ENCODE measurements at regions of chr16 and their contacts with region 1.

Region 1: DNA sequence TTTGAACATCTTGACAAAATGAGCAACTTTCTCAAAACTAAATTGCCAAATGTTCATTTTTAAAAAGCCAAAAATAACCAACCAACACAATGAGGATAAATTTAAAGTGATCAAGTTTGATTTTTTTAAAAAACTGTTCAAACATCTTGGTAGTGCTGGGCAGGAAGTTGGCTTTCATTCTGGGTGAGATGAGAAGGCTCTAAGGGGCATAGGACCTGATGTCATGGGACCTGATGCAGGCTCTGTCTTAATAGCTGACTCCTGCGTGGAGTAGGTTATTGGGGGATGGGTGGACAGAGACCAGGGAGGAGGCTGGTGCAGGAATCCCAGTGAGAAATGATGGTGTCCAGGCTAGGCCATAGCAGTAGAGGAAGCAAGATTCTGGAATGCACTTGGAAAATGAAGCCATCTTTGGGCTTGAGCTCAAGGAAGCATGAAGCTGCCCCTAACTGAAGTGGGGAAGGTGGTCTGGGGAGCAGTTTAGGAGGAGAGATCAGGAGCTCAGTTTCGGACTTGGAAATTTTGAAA is 20.4 kb downstream of the NLRC5 start:
- DNase-seq: peak; percentile 31
- ATAC-seq: peak; percentile 38
- H3K4me3 Mint-ChIP-seq: peak overlapping the region; percentile 43
- H3K27ac Mint-ChIP-seq: peak overlapping the region; percentile 80
- H3K4me1 Mint-ChIP-seq: peaks cover 61% of the 10 kb centered on the region
- H3K27me3 Mint-ChIP-seq: no peaks in the 10 kb centered on the region

Region 2: DNA sequence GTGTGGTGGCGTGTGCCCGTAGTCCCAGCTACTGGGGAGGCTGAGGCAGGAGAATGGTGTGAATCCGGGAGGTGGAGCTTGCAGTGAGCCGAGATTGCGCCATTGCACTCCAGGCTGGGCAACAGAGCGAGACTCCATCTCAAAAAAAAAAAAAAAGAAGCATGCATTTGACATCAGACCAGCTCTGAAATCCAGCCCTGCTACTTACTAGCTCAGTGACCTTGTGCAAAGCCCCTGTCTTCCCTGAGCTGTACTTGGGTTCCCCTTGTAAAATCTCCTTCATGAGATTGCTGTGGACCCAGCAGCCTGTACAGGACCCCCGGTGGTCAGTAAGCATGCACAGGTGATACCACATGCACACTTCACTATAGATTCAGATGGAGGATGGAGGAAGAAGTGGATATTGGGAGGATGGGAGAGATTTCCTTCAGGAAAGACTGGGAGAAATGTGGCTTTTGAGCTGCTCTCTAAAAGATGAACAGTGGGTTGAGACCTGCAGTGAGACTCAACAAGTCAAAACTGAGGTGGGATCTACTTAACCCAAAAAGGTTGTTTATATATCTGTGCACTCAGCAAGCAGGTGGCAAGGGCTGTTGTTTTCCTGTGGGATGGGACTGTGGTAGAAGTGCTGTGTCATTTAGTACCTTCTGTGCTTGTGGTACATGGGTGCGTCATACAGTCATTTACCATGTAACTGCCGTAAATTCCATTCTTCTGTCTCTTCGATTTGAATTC is 71.1 kb before region 1 on chr16:
- POLR2A ChIA-PET with region 1: no interaction called
- DNase-seq: no peak
- ATAC-seq: peak; percentile 81
- H3K4me3 Mint-ChIP-seq: peak overlapping the region; percentile 84
- H3K27ac Mint-ChIP-seq: peak overlapping the region; percentile 86
- H3K4me1 Mint-ChIP-seq: peaks cover 63% of the 10 kb centered on the region
- H3K27me3 Mint-ChIP-seq: no peaks in the 10 kb centered on the region

Region 3: DNA sequence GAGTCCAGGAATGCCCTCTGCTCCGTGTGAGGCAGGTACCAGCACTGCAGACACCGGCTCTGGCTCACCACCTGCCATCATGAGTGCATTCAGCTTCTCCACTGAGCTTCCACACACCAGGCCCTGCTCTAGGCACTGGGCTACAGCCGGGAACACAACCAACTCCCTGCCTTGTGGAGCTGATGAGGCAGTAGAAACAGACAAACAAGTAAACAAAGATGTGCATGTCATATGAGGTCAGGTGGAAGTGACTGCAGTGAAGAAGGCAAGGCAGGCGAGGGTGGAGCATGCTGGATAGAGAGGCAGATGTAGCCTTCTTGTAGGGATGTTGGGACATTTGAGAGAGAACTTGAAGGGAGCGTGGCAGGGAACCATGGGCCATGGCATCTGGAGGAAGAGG is 15.4 kb before region 1 on chr16:
- POLR2A ChIA-PET with region 1: interaction called, 18 read pairs
- DNase-seq: peak; percentile 39
- ATAC-seq: no peak
- H3K4me3 Mint-ChIP-seq: peak overlapping the region; percentile 72
- H3K27ac Mint-ChIP-seq: peak overlapping the region; percentile 82
- H3K4me1 Mint-ChIP-seq: peaks cover 59% of the 10 kb centered on the region
- H3K27me3 Mint-ChIP-seq: no peaks in the 10 kb centered on the region

Region 4: GRCh38 chr16:57023541-57024249 is 14.0 kb after region 1 on chr16:
- POLR2A ChIA-PET with region 1: interaction called, 12 read pairs
- DNase-seq: peak; percentile 73
- ATAC-seq: peak; percentile 77
- H3K4me3 Mint-ChIP-seq: peak overlapping the region; percentile 66
- H3K27ac Mint-ChIP-seq: peak overlapping the region; percentile 84
- H3K4me1 Mint-ChIP-seq: peaks cover 67% of the 10 kb centered on the region
- H3K27me3 Mint-ChIP-seq: no peaks in the 10 kb centered on the region

Region 5: DNA sequence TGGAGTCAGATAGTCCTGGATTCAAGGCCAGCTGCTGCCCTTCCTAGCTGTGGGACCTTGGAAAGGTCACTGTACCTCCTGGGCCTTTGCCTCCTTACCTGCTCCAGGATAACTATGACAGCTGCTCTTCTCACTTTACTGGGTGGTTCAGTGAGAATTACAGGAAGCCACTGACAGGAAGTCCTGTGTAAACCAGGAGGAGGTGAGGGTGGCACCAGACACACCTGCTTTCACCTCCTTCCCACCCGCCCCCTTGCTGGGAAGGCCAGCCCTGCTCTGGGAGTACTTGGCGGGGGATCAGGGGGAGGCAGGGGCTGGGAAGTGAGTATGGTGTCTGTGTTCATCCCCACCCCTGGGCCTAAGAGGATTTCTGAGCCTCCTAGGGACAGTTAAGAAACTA is 125.3 kb after region 1 on chr16:
- POLR2A ChIA-PET with region 1: no interaction called
- DNase-seq: peak; percentile 55
- ATAC-seq: peak; percentile 70
- H3K4me3 Mint-ChIP-seq: peak overlapping the region; percentile 82
- H3K27ac Mint-ChIP-seq: peak overlapping the region; percentile 90
- H3K4me1 Mint-ChIP-seq: peaks cover 60% of the 10 kb centered on the region
- H3K27me3 Mint-ChIP-seq: no peaks in the 10 kb centered on the region